ENCODE measurements at regions of chr1 and their contacts with region 1.

Region 1: GRCh38 chr1:70221241-70222121 is at the start of gene SRSF11:
- DNase-seq: peak; percentile 95 to 98 (median 97)
- H3K4me3 ChIP-seq: peak within 1 kb of the TSS; percentile 74 to 96 (median 93)
- H3K27ac ChIP-seq: peak within 1 kb of the TSS; percentile 96 to 98
- H3K4me1 ChIP-seq: peaks cover 12 to 42% (median 24%) of the 10 kb centered on the region in 4 experiments
- H3K27me3 ChIP-seq: no peaks in the 10 kb centered on the region

Region 2: GRCh38 chr1:70017770-70018169 is 203.7 kb before region 1 on chr1:
- CTCF ChIA-PET with region 1: no interaction called
- POLR2A ChIA-PET with region 1: no interaction called
- DNase-seq: no peak
- H3K4me3 ChIP-seq: no peak overlapping the region
- H3K27ac ChIP-seq: no peak overlapping the region
- H3K4me1 ChIP-seq: no peaks in the 10 kb centered on the region
- H3K27me3 ChIP-seq: no peaks in the 10 kb centered on the region

Region 3: DNA sequence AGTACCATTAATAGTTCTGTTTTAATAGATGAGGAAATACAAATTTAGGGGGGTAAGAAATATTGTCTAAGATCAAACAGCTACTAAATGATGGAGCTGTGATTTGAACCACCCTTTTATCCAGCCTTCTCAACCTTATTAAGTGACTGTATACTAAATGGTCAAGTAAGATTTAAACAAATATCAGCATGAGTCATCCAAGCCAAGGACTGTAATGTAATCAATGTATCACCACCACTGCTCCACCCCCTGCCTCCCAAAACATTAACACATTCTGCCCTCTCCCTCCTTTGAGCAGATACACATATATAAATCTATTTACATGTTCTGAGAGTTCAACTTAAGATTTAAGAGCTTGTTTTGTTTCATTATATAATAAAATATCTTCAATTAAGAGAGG is 75.0 kb before region 1 on chr1:
- CTCF ChIA-PET with region 1: no interaction called
- POLR2A ChIA-PET with region 1: no interaction called
- DNase-seq: no peak
- H3K4me3 ChIP-seq: no peak overlapping the region
- H3K27ac ChIP-seq: no peak overlapping the region
- H3K4me1 ChIP-seq: no peaks in the 10 kb centered on the region
- H3K27me3 ChIP-seq: no peaks in the 10 kb centered on the region

Region 4: DNA sequence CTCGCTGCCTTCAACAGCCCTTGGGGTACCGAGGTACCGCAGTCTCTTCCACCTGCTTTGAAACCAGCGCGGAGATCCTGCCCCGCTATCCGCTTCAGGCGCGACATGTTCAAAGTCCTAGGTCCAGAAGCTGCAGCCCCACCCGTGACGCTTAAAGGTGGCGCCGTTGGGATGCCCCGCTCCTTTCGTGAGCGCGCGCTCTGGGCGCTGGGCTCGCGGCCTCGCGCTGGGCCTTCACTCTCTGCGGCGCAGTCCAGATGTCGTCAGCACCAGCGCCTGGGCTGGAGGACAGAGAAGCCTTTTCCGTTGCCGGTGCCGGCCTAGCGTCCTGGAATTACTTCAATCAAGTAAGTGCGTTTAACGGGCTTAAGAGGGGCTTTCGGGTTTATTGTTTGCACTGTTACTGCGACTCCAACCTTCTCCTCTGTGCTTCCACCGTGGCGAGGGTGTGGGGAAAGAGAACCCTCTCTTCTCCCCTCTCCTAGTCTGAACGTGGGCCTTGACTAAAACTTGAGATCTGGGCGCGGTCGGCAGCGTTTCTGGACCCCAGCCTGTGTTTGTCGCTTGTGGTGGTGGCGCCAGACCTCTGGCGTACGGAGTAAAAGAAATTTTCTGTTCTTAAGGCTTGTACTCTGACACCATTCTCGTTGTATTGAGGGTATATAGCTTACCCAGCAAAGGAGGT is 15.9 kb before region 1 on chr1 and contains the start of gene LRRC40:
- CTCF ChIA-PET with region 1: interaction called, 17 read pairs
- POLR2A ChIA-PET with region 1: interaction called, 7 read pairs
- DNase-seq: peak; percentile 97 to 98 (median 97)
- H3K4me3 ChIP-seq: peak within 1 kb of the TSS; percentile 75 to 100 (median 99)
- H3K27ac ChIP-seq: peak within 1 kb of the TSS; percentile 99
- H3K4me1 ChIP-seq: peaks cover 13 to 33% (median 18%) of the 10 kb centered on the region in 4 experiments
- H3K27me3 ChIP-seq: no peaks in the 10 kb centered on the region